T-cell (primary cell): ENCODE measurements at regions of chr2 and their contacts with region 1.

Region 1: DNA sequence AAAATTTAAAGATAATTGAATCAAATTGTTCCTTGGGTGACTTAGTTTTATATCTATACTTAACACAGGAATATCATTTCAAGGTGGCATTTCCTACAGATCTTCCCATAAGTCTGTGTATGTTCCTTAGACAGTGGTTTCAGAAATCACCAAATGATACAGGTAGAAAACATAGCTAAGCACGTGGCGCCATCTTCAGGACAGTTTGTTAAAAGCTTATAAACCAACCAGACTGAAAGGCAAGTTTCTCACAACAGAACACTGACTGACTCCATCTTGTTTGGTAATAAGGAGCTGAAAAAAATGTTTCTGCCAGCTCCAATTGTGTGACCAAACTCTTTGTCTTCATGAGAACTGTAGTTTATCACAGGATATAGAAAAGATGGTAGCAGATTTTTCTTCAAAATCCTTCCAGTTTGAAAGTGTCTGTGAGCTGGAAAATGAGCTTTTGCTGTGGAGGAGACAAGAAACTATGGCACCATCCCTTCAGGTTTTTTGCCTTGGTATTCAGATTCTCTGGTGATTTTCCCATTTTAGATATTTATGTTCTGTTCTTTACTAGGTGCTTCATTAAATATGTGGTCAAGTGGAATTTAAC is 34.8 kb upstream of the NEUROD1 start:
- DNase-seq: peak; percentile 9 to 86 (median 56)
- ATAC-seq: peak; percentile 43 to 84 (median 73)
- H3K4me3 ChIP-seq: no peak overlapping the region
- H3K4me3 Mint-ChIP-seq: no peak overlapping the region
- H3K27ac ChIP-seq: no peak overlapping the region
- H3K27ac Mint-ChIP-seq: no peak overlapping the region
- H3K4me1 ChIP-seq: no peaks in the 10 kb centered on the region
- H3K4me1 Mint-ChIP-seq: no peaks in the 10 kb centered on the region
- H3K27me3 ChIP-seq: peaks cover 0 to 2% of the 10 kb centered on the region in 2 experiments
- H3K27me3 Mint-ChIP-seq: no peaks in the 10 kb centered on the region

Region 2: GRCh38 chr2:180125245-180125962 is 1589.7 kb before region 1 on chr2:
- CTCF ChIA-PET with region 1: interaction called, 3 to 31 read pairs
- POLR2A ChIA-PET with region 1: no interaction called
- DNase-seq: peak in 32 of 35 experiments; percentile 0 to 60 (median 22)
- ATAC-seq: peak; percentile 80 to 90 (median 87)
- H3K4me3 ChIP-seq: no peak overlapping the region
- H3K4me3 Mint-ChIP-seq: no peak overlapping the region
- H3K27ac ChIP-seq: no peak overlapping the region
- H3K27ac Mint-ChIP-seq: no peak overlapping the region
- H3K4me1 ChIP-seq: no peaks in the 10 kb centered on the region
- H3K4me1 Mint-ChIP-seq: peaks cover 5 to 6% (median 6%) of the 10 kb centered on the region in 3 donors
- H3K27me3 ChIP-seq: peaks cover 0 to 5% of the 10 kb centered on the region in 2 experiments
- H3K27me3 Mint-ChIP-seq: peaks cover 10% of the 10 kb centered on the region in 2 donors

Region 3: DNA sequence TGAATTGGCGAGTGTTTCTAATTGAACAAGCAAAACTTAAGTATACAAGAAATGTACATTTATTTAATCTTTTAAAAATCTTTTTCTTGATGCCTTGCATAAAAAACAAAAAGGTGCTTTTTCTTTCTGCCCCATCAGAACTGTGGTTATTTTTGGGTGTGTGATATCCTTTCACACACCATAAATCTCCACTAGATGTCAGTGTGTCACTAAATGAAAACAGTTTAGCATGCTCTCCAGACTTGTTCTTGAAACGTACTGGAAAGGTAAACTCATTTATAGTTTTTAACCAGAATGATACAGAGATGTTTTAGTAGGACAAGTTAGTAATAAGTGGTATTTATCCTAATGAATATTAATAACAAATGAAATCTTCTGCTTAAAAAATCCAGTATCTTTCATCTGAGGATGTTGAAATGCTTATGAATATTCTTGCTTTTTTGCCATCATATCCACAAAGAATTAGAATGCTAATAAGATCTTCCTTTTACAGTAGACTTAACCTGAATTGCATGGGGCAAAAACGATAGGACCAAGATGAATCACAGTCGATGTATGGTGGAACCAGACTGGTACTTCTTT is 637.9 kb before region 1 on chr2:
- CTCF ChIA-PET with region 1: interaction called, 4 to 19 read pairs
- POLR2A ChIA-PET with region 1: no interaction called
- DNase-seq: peak in 10 of 35 experiments; percentile 0 to 82 (median 16)
- ATAC-seq: peak; percentile 73 to 90 (median 82)
- H3K4me3 ChIP-seq: no peak overlapping the region
- H3K4me3 Mint-ChIP-seq: no peak overlapping the region
- H3K27ac ChIP-seq: no peak overlapping the region
- H3K27ac Mint-ChIP-seq: no peak overlapping the region
- H3K4me1 ChIP-seq: no peaks in the 10 kb centered on the region
- H3K4me1 Mint-ChIP-seq: peaks cover 5 to 8% (median 7%) of the 10 kb centered on the region in 3 donors
- H3K27me3 ChIP-seq: no peaks in the 10 kb centered on the region
- H3K27me3 Mint-ChIP-seq: no peaks in the 10 kb centered on the region

Region 4: GRCh38 chr2:181573140-181573736 is 141.9 kb before region 1 on chr2:
- CTCF ChIA-PET with region 1: interaction called, 20 to 43 read pairs
- POLR2A ChIA-PET with region 1: no interaction called
- DNase-seq: peak in 1 of 35 experiments; percentile 16
- ATAC-seq: no peak
- H3K4me3 ChIP-seq: no peak overlapping the region
- H3K4me3 Mint-ChIP-seq: no peak overlapping the region
- H3K27ac ChIP-seq: no peak overlapping the region
- H3K27ac Mint-ChIP-seq: no peak overlapping the region
- H3K4me1 ChIP-seq: no peaks in the 10 kb centered on the region
- H3K4me1 Mint-ChIP-seq: peaks cover 0 to 2% (median 0%) of the 10 kb centered on the region in 3 donors
- H3K27me3 ChIP-seq: peaks cover 0 to 9% of the 10 kb centered on the region in 2 experiments
- H3K27me3 Mint-ChIP-seq: peaks cover 8 to 20% of the 10 kb centered on the region in 2 donors

Region 5: DNA sequence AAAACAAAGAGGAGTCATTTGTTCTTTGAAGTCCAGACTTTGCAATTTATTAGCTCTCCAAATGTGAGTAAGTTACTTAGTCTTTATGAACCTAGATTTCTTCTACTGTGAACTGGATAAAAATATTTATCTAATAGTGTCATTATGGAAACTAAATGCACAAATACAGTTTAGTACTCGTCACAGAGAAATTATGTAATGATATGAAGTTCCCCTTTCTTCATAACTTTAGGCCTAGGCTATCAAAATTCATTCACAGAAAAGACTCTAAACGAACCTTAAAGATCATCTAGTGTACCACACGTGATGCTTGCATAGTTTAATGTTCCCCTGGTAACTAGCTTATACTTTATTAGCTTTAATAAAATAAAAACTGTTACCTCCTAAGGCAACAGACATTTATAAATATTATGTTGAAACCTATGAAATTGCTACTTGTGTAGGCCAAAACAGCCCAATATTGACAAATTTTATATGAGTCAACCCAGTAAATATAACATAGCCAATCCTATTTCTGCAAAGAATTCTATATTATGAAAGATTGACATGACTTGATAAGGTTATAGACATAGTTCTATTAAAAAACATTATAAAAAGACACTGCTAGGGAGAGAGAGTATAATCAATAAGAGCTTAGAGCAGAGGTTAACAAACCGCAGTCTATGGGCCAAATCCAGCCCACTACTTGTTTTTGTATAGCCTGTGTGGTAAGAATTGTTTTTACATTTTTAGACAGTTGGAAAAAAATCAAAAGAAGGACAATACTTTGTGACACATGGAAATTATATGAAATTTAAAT is 131.5 kb after region 1 on chr2:
- CTCF ChIA-PET with region 1: no interaction called
- POLR2A ChIA-PET with region 1: no interaction called
- DNase-seq: no peak
- ATAC-seq: no peak
- H3K4me3 ChIP-seq: no peak overlapping the region
- H3K4me3 Mint-ChIP-seq: no peak overlapping the region
- H3K27ac ChIP-seq: no peak overlapping the region
- H3K27ac Mint-ChIP-seq: no peak overlapping the region
- H3K4me1 ChIP-seq: no peaks in the 10 kb centered on the region
- H3K4me1 Mint-ChIP-seq: peaks cover 0 to 2% (median 0%) of the 10 kb centered on the region in 3 donors
- H3K27me3 ChIP-seq: no peaks in the 10 kb centered on the region
- H3K27me3 Mint-ChIP-seq: peaks cover 0 to 2% of the 10 kb centered on the region in 2 donors

Region 6: DNA sequence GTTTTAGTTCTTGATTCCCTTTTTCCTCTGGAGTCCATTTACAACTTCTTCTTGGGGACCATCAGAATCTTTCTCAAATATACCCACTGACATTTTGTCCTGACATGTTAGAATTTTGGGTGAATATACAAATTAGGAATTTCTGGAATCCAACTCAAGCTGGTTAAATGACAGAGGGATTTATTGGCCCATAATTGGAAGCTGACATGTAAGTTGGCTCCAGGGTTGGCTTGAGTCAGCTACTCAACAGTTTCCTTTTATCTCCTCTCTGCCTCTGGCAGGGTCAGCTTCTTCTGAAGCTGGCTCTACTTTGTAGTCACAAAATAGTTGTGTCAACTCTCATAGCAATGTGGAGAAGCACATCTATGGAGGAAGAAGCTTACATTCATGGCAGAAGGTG is 233.9 kb after region 1 on chr2:
- CTCF ChIA-PET with region 1: no interaction called
- POLR2A ChIA-PET with region 1: no interaction called
- DNase-seq: no peak
- ATAC-seq: no peak
- H3K4me3 ChIP-seq: no peak overlapping the region
- H3K4me3 Mint-ChIP-seq: no peak overlapping the region
- H3K27ac ChIP-seq: no peak overlapping the region
- H3K27ac Mint-ChIP-seq: no peak overlapping the region
- H3K4me1 ChIP-seq: peaks cover 2 to 5% of the 10 kb centered on the region in 2 experiments
- H3K4me1 Mint-ChIP-seq: peaks cover 6 to 8% (median 7%) of the 10 kb centered on the region in 3 donors
- H3K27me3 ChIP-seq: peaks cover 0 to 3% of the 10 kb centered on the region in 2 experiments
- H3K27me3 Mint-ChIP-seq: peaks cover 10 to 19% of the 10 kb centered on the region in 2 donors